ENCODE measurements at regions of chr13 and their contacts with region 1.

Region 1: GRCh38 chr13:89695343-89696257 is 1651.9 kb upstream of the MIR17HG start:
- DNase-seq: peak; percentile 75
- ATAC-seq: peak; percentile 77
- H3K4me3 ChIP-seq: no peak overlapping the region
- H3K27ac ChIP-seq: no peak overlapping the region
- H3K4me1 ChIP-seq: no peaks in the 10 kb centered on the region
- H3K27me3 ChIP-seq: no peaks in the 10 kb centered on the region
- CTCF ChIP-seq: peak; percentile 81

Region 2: GRCh38 chr13:89066868-89067466 is 628.6 kb before region 1 on chr13:
- CTCF ChIA-PET with region 1: no interaction called
- POLR2A ChIA-PET with region 1: no interaction called
- intact Hi-C with region 1: loop called (anchors 10 kb)
- DNase-seq: peak; percentile 68
- ATAC-seq: peak; percentile 66
- H3K4me3 ChIP-seq: no peak overlapping the region
- H3K27ac ChIP-seq: no peak overlapping the region
- H3K4me1 ChIP-seq: no peaks in the 10 kb centered on the region
- H3K27me3 ChIP-seq: no peaks in the 10 kb centered on the region
- CTCF ChIP-seq: peak; percentile 72

Region 3: GRCh38 chr13:89361909-89362308 is 333.7 kb before region 1 on chr13:
- CTCF ChIA-PET with region 1: interaction called, 4 read pairs
- POLR2A ChIA-PET with region 1: no interaction called
- intact Hi-C with region 1: loop called (anchors 1 kb)
- DNase-seq: peak; percentile 41
- ATAC-seq: no peak; the same call in 1 of the 2 replicates
- H3K4me3 ChIP-seq: no peak overlapping the region
- H3K27ac ChIP-seq: no peak overlapping the region
- H3K4me1 ChIP-seq: no peaks in the 10 kb centered on the region
- H3K27me3 ChIP-seq: no peaks in the 10 kb centered on the region
- CTCF ChIP-seq: peak; percentile 53

Region 4: DNA sequence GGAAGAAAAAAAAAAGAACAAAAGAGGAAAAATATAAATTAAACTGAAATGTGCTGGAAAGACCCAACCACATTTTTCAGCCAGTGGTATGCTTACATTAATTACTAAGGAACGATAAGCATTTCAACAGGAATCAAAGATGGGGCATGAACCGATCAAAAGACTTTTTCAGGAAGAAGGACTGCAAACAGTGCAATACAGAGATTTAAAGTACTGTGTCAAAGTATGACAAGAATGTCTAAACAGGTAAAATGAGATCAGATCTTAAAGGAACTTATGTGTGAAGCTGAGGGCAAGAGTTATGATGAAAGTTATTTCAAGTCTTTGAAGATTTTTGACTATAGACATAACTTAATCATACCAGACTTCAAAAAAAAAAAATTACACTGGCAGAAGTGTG is 262.6 kb before region 1 on chr13:
- CTCF ChIA-PET with region 1: no interaction called
- POLR2A ChIA-PET with region 1: no interaction called
- intact Hi-C with region 1: loop called (anchors 5 kb)
- DNase-seq: no peak
- ATAC-seq: no peak
- H3K4me3 ChIP-seq: no peak overlapping the region
- H3K27ac ChIP-seq: no peak overlapping the region
- H3K4me1 ChIP-seq: no peaks in the 10 kb centered on the region
- H3K27me3 ChIP-seq: no peaks in the 10 kb centered on the region
- CTCF ChIP-seq: no peak

Region 5: DNA sequence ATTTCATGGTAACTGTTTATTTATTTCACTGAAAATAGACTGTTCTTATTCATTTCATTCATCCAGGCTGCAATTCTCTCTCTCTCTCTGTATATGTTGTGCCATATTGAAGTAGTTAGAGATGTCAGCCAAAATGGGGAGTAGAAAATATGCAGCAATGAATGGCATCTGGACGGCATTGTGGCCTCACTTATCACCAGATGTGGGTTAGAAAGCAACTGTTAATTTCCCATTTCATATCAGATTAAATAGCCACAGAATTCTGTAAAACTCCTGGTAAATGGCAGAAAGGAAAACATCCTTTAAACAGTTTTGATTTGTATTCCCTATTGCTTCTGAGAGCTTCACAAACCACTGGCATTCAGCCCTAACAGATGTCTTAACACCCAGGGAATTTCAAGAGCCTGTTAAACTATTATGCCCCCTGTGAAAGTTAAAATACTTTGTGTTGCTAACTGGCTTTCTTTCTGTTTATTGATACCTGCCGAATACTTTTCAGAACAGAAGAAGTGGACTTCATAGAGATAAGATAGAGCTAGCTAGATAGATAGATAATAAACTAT is 111.5 kb before region 1 on chr13:
- CTCF ChIA-PET with region 1: no interaction called
- POLR2A ChIA-PET with region 1: no interaction called
- intact Hi-C with region 1: loop called (anchors 2 kb)
- DNase-seq: no peak
- ATAC-seq: no peak
- H3K4me3 ChIP-seq: no peak overlapping the region
- H3K27ac ChIP-seq: no peak overlapping the region
- H3K4me1 ChIP-seq: no peaks in the 10 kb centered on the region
- H3K27me3 ChIP-seq: no peaks in the 10 kb centered on the region
- CTCF ChIP-seq: no peak

Region 6: GRCh38 chr13:89925107-89925506 is 229.5 kb after region 1 on chr13:
- CTCF ChIA-PET with region 1: no interaction called
- POLR2A ChIA-PET with region 1: no interaction called
- intact Hi-C with region 1: loop called (anchors 5 kb)
- DNase-seq: peak; percentile 53
- ATAC-seq: peak; percentile 80
- H3K4me3 ChIP-seq: no peak overlapping the region
- H3K27ac ChIP-seq: no peak overlapping the region
- H3K4me1 ChIP-seq: no peaks in the 10 kb centered on the region; the same call in 1 of the 2 replicates
- H3K27me3 ChIP-seq: no peaks in the 10 kb centered on the region
- CTCF ChIP-seq: peak; percentile 79

Measured in PC-3 (cell line).